ENCODE measurements at regions of chr1 and their contacts with region 1.

Region 1: GRCh38 chr1:153532769-153533599 is 2.8 kb downstream of the S100A6 start:
- DNase-seq: no peak
- H3K4me3 ChIP-seq: peak overlapping the region; percentile 99
- CTCF ChIP-seq: peak; percentile 99

Region 2: DNA sequence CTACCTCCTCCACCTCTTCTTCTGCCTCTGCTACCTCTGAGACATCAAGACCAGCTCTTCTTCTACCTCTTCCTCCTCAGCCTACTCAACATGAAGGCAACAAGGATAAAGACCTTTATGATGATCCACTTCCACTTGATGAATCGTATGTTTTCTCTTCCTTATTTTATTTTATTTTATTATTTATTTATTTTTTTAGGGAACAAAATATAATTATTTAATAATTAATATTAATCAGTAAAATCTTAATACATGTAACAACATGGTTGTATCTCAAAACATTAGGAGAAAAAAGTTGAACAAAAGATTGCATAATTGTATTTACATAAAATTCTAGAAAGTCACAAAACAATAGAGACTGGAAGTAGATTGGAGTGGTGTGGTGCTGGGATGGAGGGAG is 1295.9 kb before region 1 on chr1:
- CTCF ChIA-PET with region 1: no interaction called
- POLR2A ChIA-PET with region 1: no interaction called
- DNase-seq: no peak
- H3K4me3 ChIP-seq: no peak overlapping the region
- CTCF ChIP-seq: no peak

Region 3: DNA sequence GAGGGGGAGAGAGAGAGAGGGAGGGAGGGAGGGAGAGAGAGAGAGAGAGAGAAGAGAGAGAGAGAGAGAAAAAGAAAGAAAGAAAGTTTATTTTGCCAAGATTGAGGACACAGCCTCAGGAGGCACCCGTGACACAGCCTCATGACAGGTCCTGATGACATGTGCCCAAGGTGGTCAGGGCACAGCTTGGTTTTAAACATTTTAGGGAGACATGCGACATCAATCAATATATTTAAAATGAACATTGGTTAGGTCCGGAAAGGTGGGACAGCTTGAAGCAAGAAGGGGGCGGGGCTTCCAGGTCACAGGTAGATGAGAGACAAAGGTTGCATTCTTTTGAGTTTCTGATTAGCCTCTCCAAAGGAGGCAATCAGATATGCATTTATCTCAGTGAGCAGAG is 12.8 kb before region 1 on chr1:
- CTCF ChIA-PET with region 1: interaction called, 143 read pairs
- POLR2A ChIA-PET with region 1: interaction called, 13 read pairs
- DNase-seq: no peak
- H3K4me3 ChIP-seq: no peak overlapping the region
- CTCF ChIP-seq: no peak

Region 4: GRCh38 chr1:153553830-153554541 is 21.0 kb after region 1 on chr1:
- CTCF ChIA-PET with region 1: interaction called, 97 read pairs
- POLR2A ChIA-PET with region 1: interaction called, 7 read pairs
- DNase-seq: no peak
- H3K4me3 ChIP-seq: no peak overlapping the region
- CTCF ChIP-seq: no peak

Region 5: GRCh38 chr1:153577624-153578051 is 44.7 kb after region 1 on chr1:
- CTCF ChIA-PET with region 1: interaction called, 333 read pairs
- POLR2A ChIA-PET with region 1: interaction called, 17 read pairs
- DNase-seq: no peak
- H3K4me3 ChIP-seq: no peak overlapping the region
- CTCF ChIP-seq: no peak

Region 6: GRCh38 chr1:153617675-153618074 is 84.7 kb after region 1 on chr1:
- CTCF ChIA-PET with region 1: interaction called, 24 read pairs
- POLR2A ChIA-PET with region 1: interaction called, 15 read pairs
- DNase-seq: no peak
- H3K4me3 ChIP-seq: no peak overlapping the region
- CTCF ChIP-seq: peak; percentile 81

Region 7: DNA sequence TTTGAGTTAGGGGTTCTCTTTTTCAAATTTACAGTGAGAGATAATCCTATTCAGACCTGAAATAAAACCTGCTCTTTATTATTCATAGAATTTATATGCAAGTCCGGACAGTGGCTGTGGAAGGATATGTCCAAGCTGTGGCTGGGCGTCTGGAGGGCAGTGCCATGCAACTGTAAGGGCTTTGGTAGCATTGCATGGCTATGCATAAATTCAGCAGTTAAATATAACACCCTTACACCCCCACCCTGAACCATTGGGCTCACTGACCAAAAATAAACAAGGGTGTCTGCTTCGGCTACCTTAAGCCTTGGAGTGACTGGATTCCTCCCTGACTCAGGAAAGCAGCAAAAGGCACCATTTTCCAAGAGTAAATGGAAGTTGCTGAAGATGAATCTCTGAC is 106.3 kb after region 1 on chr1:
- CTCF ChIA-PET with region 1: interaction called, 10 read pairs
- POLR2A ChIA-PET with region 1: interaction called, 6 read pairs
- DNase-seq: no peak
- H3K4me3 ChIP-seq: no peak overlapping the region
- CTCF ChIP-seq: no peak